ENCODE measurements at regions of chr15 and their contacts with region 1.

Region 1: GRCh38 chr15:56918046-56918938 is at the start of gene TCF12:
- DNase-seq: peak; percentile 93
- H3K4me3 Mint-ChIP-seq: peak within 1 kb of the TSS; percentile 85
- H3K27ac Mint-ChIP-seq: peak within 1 kb of the TSS; percentile 76
- H3K4me1 Mint-ChIP-seq: peaks cover 6% of the 10 kb centered on the region
- H3K27me3 Mint-ChIP-seq: no peaks in the 10 kb centered on the region
- CTCF ChIP-seq: peak; percentile 41
- total RNA-seq, gene TCF12: 140 and 163 TPM in 2 replicates

Region 2: DNA sequence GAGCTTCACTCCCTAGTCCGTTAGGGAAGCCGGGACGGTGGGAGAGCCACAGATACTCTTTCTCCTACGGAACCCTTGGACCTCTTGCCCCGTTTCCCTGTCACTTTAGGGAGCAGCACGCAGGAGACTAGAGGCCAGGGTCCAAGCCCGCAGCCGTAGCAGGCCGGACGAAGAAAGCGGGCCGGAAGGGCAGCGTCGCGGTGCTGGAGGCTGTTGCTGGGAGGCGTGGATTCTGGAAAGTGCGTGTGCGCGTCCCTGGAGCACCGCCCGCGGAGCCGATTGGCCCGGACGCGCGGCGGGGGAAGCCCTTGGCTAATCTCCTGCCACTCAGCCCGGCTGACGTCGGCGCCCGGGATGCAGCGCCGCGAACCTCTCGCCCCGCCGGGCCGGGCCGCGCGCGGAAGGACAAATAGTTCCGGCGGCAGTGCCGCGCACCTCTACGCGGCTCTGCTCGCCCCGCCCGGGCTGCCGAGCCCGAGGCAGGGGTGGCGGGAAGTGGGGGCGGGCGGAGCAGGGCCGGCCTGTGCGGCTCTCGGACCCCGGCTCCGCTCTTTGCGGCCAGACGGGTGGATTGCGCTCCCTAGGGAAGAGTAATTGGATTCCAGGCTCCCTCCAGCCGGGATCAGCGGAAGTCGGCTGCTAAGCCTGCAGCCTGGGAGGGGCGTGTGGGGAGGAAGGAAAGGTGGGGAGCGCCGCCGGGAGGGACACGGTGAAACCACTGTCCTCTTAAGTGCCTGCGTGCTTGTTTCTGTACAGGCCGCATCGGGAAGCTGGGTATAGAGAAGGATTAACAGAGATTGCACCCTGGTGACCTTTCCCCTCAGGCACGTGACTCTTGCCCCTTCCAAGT is 31.1 kb before region 1 on chr15:
- CTCF ChIA-PET with region 1: interaction called, 4 read pairs
- POLR2A ChIA-PET with region 1: interaction called, 88 read pairs
- intact Hi-C with region 1: loop called (anchors 1 kb)
- DNase-seq: peak; percentile 93
- H3K4me3 Mint-ChIP-seq: peak overlapping the region; percentile 81
- H3K27ac Mint-ChIP-seq: peak overlapping the region; percentile 61
- H3K4me1 Mint-ChIP-seq: peaks cover 24% of the 10 kb centered on the region
- H3K27me3 Mint-ChIP-seq: no peaks in the 10 kb centered on the region
- CTCF ChIP-seq: no peak

Region 3: GRCh38 chr15:56929399-56929798 is 11.1 kb after region 1 on chr15:
- CTCF ChIA-PET with region 1: interaction called, 4 read pairs
- POLR2A ChIA-PET with region 1: interaction called, 29 read pairs
- intact Hi-C with region 1: no loop called
- DNase-seq: peak; percentile 27
- H3K4me3 Mint-ChIP-seq: no peak overlapping the region
- H3K27ac Mint-ChIP-seq: peak overlapping the region; percentile 29
- H3K4me1 Mint-ChIP-seq: peaks cover 46% of the 10 kb centered on the region
- H3K27me3 Mint-ChIP-seq: no peaks in the 10 kb centered on the region
- CTCF ChIP-seq: no peak

Region 4: DNA sequence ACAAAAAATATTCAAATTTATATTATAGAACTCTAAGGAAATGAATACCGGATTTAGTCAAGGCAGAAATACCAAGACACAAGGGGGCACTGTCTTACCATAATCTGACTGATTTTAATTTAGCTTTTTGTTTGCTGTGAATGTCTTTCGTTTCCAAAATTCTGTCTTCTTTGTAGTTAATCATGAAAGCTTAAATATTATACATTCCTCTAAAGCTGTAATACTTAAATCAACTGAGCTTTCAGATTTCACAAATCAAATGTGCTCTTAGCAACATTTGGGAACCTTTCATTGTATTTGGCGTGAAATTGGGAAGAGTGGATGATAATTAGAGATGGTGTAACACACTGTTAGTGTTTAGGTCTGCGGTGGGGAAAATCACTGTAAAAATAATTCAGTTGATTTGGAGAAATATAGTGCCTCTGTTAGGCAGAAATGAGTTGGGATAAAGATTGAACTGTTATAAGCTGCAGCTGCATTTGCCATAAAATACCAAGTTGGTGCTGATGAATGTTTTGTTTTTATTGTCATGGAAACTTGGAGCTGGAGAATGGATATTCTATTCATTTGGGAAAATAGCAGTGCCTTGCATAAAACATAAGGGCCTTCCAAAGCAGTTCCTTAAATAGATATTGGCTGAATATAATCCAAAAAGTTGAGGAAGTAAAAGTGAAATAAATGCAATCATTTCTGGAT is 228.4 kb after region 1 on chr15:
- CTCF ChIA-PET with region 1: interaction called, 10 read pairs
- POLR2A ChIA-PET with region 1: interaction called, 17 read pairs
- intact Hi-C with region 1: no loop called
- DNase-seq: peak; percentile 54
- H3K4me3 Mint-ChIP-seq: no peak overlapping the region
- H3K27ac Mint-ChIP-seq: no peak overlapping the region
- H3K4me1 Mint-ChIP-seq: peaks cover 27% of the 10 kb centered on the region
- H3K27me3 Mint-ChIP-seq: no peaks in the 10 kb centered on the region
- CTCF ChIP-seq: peak; percentile 69

Region 5: DNA sequence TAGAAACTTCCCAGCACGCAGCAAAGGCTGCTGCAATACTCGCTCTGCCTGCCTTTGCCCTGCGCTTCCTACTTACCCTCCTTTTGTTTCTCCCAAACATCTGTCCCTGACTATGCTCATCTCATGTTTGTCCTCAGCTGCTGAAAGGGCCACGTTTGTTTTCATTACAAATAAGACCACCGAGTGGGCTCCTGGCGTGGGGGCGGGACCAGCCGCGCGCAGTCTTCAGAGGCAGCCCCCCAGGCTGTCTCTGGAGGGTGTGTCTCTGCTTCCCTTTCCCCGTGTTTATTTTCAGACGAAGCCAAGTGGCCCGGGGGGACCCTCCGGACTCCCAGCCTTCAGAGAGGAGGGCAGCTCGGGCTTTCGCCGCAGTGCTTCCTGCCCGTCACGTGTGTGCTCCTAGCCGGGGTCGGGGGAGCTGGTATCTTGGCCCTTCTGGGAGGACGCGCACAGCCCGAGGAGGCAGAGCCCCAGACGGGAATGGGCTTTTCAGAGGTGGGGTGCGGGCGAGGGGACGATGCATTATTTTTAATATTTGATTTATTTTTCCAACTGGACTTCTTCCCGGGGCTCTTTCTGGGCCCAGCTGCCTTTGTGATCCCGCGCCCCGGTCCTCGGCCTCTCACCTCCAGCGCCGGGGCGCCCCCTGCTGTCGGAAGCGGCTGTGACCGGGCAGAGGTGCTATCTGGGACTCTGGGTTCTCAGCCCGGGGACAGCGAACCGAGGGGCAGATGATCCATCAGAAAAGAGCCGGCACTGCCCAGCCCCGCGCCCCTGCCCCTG is 388.1 kb after region 1 on chr15:
- CTCF ChIA-PET with region 1: interaction called, 4 read pairs
- POLR2A ChIA-PET with region 1: no interaction called
- intact Hi-C with region 1: loop called (anchors 5 kb)
- DNase-seq: peak; percentile 74
- H3K4me3 Mint-ChIP-seq: peak overlapping the region; percentile 32
- H3K27ac Mint-ChIP-seq: no peak overlapping the region
- H3K4me1 Mint-ChIP-seq: no peaks in the 10 kb centered on the region
- H3K27me3 Mint-ChIP-seq: no peaks in the 10 kb centered on the region
- CTCF ChIP-seq: peak; percentile 77